ENCODE measurements at regions of chr4 and their contacts with region 1.

Region 1: DNA sequence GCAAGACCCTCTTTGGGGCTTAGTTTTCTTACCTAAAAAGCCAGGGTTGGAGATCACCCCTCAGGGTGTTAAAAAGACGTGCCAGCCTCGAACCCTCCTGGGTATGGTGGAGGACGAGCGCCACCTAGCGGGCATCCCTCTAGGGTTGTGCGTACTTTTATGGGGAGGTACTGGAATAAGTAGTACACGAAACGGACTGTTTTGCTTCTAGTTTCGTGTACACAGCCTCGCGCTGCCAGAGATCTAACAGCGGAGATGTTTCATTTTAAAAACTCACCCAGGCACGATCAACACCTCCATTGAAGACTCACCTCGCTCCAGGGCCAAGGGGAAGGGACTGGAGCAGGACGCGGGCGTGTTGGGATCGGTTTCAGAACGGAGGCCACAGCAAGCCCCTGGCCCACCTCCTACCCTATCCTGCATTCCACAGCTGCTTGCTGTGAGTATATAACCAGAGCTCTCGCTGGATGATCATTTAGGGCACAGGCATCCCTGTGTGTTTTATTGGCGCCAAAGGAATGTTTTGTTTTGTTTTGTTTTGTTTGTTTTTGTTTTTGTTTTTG is 4.8 kb upstream of the NKX3-2 start:
- DNase-seq: peak; percentile 71 to 88
- ATAC-seq: peak; percentile 55 to 82 (median 61)
- H3K4me3 ChIP-seq: no peak overlapping the region
- H3K4me3 Mint-ChIP-seq: peak overlapping the region; percentile 35
- H3K27ac ChIP-seq: no peak overlapping the region
- H3K27ac Mint-ChIP-seq: no peak overlapping the region
- H3K4me1 ChIP-seq: peaks cover 30% of the 10 kb centered on the region
- H3K4me1 Mint-ChIP-seq: peaks cover 28 to 29% of the 10 kb centered on the region in 2 donors
- H3K27me3 ChIP-seq: peaks cover 39% of the 10 kb centered on the region
- H3K27me3 Mint-ChIP-seq: peaks cover 55 to 74% of the 10 kb centered on the region in 2 donors
- CTCF ChIP-seq: peak; percentile 90

Region 2: GRCh38 chr4:11765849-11766453 is 1783.1 kb before region 1 on chr4:
- intact Hi-C with region 1: loop called (anchors 5 kb)
- DNase-seq: peak in 1 of 2 donors; percentile 32
- ATAC-seq: no peak
- H3K4me3 ChIP-seq: no peak overlapping the region
- H3K4me3 Mint-ChIP-seq: no peak overlapping the region
- H3K27ac ChIP-seq: no peak overlapping the region
- H3K27ac Mint-ChIP-seq: no peak overlapping the region
- H3K4me1 ChIP-seq: no peaks in the 10 kb centered on the region
- H3K4me1 Mint-ChIP-seq: no peaks in the 10 kb centered on the region
- H3K27me3 ChIP-seq: no peaks in the 10 kb centered on the region
- H3K27me3 Mint-ChIP-seq: no peaks in the 10 kb centered on the region
- CTCF ChIP-seq: peak; percentile 40

Region 3: GRCh38 chr4:12729384-12729783 is 819.7 kb before region 1 on chr4:
- intact Hi-C with region 1: loop called (anchors 1 kb)
- DNase-seq: peak in 1 of 2 donors; percentile 36
- ATAC-seq: no peak
- H3K4me3 ChIP-seq: no peak overlapping the region
- H3K4me3 Mint-ChIP-seq: no peak overlapping the region
- H3K27ac ChIP-seq: no peak overlapping the region
- H3K27ac Mint-ChIP-seq: no peak overlapping the region
- H3K4me1 ChIP-seq: no peaks in the 10 kb centered on the region
- H3K4me1 Mint-ChIP-seq: no peaks in the 10 kb centered on the region
- H3K27me3 ChIP-seq: no peaks in the 10 kb centered on the region
- H3K27me3 Mint-ChIP-seq: peaks cover 0 to 6% of the 10 kb centered on the region in 2 donors
- CTCF ChIP-seq: peak; percentile 47

Region 4: DNA sequence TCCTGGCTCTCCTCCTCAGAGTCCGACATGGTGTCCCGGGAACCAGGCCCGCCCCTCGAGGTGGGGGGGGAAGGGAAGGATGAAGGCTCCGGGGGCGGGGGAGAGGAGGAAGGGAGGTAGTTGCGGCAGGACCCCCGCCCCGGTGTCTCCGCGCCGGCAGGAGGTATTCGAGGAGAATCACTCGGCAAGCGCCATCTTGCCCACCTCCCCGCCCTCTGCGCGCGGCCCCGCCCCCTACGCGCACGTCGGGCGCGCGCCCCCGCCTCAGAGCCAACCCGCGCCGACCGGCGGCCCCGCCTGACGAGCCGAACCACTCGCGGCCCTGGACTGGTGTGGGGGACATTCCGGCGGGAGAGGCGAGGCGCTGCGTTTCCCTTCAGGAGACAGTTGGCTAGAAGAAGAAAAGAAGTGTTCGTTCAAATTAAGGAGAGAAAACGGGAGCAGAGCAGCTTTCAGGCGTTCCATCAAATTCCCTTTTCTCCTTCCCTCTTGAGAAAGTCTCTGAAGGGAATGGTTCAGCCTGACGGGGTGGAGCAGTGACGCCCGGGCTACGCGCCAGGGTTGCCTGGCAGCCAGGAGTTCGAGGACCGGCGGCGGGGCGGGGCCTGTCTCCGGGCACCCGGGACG is 64.8 kb before region 1 on chr4 and contains the start of gene RAB28:
- intact Hi-C with region 1: loop called (anchors 5 kb)
- DNase-seq: peak; percentile 94 to 96
- ATAC-seq: peak; percentile 87 to 97 (median 88)
- H3K4me3 ChIP-seq: peak within 1 kb of the TSS; percentile 58
- H3K4me3 Mint-ChIP-seq: peak within 1 kb of the TSS; percentile 92
- H3K27ac ChIP-seq: peak within 1 kb of the TSS; percentile 91
- H3K27ac Mint-ChIP-seq: peak within 1 kb of the TSS; percentile 98 to 99
- H3K4me1 ChIP-seq: peaks cover 18% of the 10 kb centered on the region
- H3K4me1 Mint-ChIP-seq: peaks cover 20 to 27% of the 10 kb centered on the region in 2 donors
- H3K27me3 ChIP-seq: peaks cover 3% of the 10 kb centered on the region
- H3K27me3 Mint-ChIP-seq: peaks cover 13 to 28% of the 10 kb centered on the region in 2 donors
- CTCF ChIP-seq: no peak
- total RNA-seq, gene RAB28: 10.2 to 13.1 (median 12.9) TPM

Measured in natural killer cell (primary cell).